Activated CD8-positive, alpha-beta T cell treated with anti-CD3 and anti-CD28 coated beads for 36 hours (primary cell): ENCODE measurements at regions of chr19 and their contacts with region 1.

Region 1: GRCh38 chr19:21314676-21315075 is 14.5 kb downstream of the ZNF708 start:
- DNase-seq: no peak
- ATAC-seq: no peak
- H3K4me3 Mint-ChIP-seq: no peak overlapping the region
- H3K27ac Mint-ChIP-seq: peak overlapping the region; percentile 48
- H3K4me1 Mint-ChIP-seq: peaks cover 40% of the 10 kb centered on the region
- H3K27me3 Mint-ChIP-seq: no peaks in the 10 kb centered on the region
- CTCF ChIP-seq: no peak

Region 2: GRCh38 chr19:21328885-21329605 is 14.4 kb after region 1 on chr19 and contains the start of gene ZNF708:
- CTCF ChIA-PET with region 1: interaction called, 4 read pairs
- POLR2A ChIA-PET with region 1: interaction called, 15 read pairs
- intact Hi-C with region 1: no loop called
- DNase-seq: peak; percentile 91
- ATAC-seq: peak; percentile 100
- H3K4me3 Mint-ChIP-seq: peak within 1 kb of the TSS; percentile 95
- H3K27ac Mint-ChIP-seq: peak within 1 kb of the TSS; percentile 99
- H3K4me1 Mint-ChIP-seq: peaks cover 35% of the 10 kb centered on the region
- H3K27me3 Mint-ChIP-seq: no peaks in the 10 kb centered on the region
- CTCF ChIP-seq: no peak
- total RNA-seq, gene ZNF708: 9.2 to 9.3 TPM

Region 3: DNA sequence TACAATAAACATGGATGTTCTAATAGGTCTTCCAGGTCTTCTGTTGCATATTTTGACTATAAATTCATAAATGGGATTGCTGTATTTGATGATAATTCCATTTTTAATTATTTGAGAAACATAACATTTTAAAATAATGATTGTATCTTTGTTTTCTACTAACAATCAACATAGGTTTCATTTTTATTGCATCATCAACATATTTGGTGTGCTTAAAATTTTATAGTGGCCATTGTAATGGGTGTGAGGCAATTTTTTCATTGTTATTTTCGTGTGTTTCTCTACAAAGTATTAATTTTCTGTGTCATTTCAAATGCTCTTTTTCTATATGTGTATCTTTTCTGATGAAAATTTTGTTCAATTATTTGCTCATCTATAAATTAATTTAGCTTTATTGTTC is 95.5 kb after region 1 on chr19:
- CTCF ChIA-PET with region 1: no interaction called
- POLR2A ChIA-PET with region 1: no interaction called
- intact Hi-C with region 1: no loop called
- DNase-seq: no peak
- ATAC-seq: no peak
- H3K4me3 Mint-ChIP-seq: no peak overlapping the region
- H3K27ac Mint-ChIP-seq: no peak overlapping the region
- H3K4me1 Mint-ChIP-seq: peaks cover 1% of the 10 kb centered on the region
- H3K27me3 Mint-ChIP-seq: no peaks in the 10 kb centered on the region
- CTCF ChIP-seq: no peak